Activated CD4-positive, alpha-beta memory T cell treated with anti-CD3 and anti-CD28 coated beads for 36 hours (primary cell): ENCODE measurements at regions of chr3 and their contacts with region 1.

Region 1: GRCh38 chr3:38479431-38480092 is 16.6 kb upstream of the EXOG start:
- DNase-seq: peak; percentile 58
- H3K4me3 Mint-ChIP-seq: no peak overlapping the region
- H3K27ac Mint-ChIP-seq: no peak overlapping the region
- H3K4me1 Mint-ChIP-seq: no peaks in the 10 kb centered on the region
- H3K27me3 Mint-ChIP-seq: no peaks in the 10 kb centered on the region

Region 2: GRCh38 chr3:37924453-37924852 is 555.1 kb before region 1 on chr3:
- CTCF ChIA-PET with region 1: no interaction called
- POLR2A ChIA-PET with region 1: no interaction called
- intact Hi-C with region 1: no loop called
- DNase-seq: no peak
- H3K4me3 Mint-ChIP-seq: no peak overlapping the region
- H3K27ac Mint-ChIP-seq: no peak overlapping the region
- H3K4me1 Mint-ChIP-seq: no peaks in the 10 kb centered on the region
- H3K27me3 Mint-ChIP-seq: no peaks in the 10 kb centered on the region

Region 3: DNA sequence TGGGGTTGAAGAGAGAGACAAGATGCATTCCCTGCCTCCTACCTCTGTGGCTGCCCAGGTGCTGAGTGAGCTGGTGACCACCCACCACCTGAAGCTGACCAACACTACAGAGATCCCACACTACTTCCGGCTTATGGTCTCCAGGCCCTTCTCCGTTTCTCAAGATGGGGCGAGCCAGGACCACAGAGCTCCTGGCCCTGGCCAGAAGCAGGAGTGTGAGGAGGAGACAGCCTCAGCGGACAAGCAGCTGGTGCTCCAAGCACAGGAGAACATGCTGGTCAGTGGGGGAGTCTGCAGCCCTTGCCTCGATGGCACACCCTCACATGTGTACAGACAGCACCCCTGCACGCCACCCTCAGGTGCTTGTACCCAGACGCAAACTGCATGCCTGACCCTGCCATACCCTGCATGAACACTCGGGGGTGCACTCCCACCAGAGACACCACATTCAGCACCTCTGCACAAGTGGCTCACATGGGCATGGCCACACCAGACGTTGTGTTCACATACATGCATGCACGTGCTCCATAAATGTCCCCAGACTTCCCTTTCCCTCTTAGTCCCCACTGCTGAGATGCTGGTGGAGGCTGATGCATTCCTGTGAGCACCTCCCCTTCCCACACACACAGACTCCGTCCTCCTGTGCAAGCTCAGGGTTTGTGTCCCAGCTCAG is 361.7 kb before region 1 on chr3:
- CTCF ChIA-PET with region 1: interaction called, 21 read pairs
- POLR2A ChIA-PET with region 1: no interaction called
- intact Hi-C with region 1: loop called (anchors 5 kb)
- DNase-seq: peak; percentile 85
- H3K4me3 Mint-ChIP-seq: no peak overlapping the region
- H3K27ac Mint-ChIP-seq: no peak overlapping the region
- H3K4me1 Mint-ChIP-seq: no peaks in the 10 kb centered on the region
- H3K27me3 Mint-ChIP-seq: no peaks in the 10 kb centered on the region

Region 4: DNA sequence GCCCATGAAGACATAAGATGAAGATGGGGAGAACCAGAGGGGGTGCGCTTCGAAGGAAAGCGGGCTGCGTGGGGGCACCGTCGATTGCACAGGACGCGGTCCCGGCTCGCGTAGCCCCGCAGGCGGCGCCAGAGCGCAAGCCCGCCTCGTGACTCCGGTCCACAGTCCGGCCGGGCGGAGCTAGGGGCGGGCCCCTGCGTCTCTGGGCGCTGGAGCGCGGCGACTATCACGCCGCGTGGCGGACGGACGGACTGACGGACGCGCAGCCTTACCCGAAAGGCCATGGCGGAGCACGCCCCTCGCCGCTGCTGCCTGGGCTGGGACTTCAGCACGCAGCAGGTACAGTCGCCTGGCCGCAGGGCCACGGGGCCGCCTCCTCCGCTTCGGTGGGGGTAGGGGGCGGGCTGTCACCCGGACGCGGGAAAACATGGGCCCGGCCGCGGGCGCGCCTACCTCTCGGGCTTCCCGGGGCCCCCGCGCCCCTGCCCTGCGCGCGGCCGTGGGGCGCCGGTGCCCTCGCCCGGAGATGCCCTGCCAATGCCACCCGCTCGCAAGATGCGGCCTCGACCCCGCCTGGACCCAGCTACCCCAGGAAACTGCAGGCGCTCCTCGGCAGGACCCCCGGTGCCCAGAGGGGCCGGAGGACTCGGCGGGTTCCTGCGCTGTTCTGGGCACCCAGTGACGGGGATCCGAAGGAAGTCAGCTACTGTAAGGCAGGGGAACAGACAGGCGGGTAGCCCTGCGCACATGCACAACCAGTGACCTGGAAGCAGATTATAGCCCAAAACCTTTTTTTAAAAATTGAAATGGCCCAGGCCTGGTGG is 132.8 kb before region 1 on chr3 and contains the start of gene XYLB:
- CTCF ChIA-PET with region 1: interaction called, 75 read pairs
- POLR2A ChIA-PET with region 1: no interaction called
- intact Hi-C with region 1: loop called (anchors 2 kb)
- DNase-seq: peak; percentile 84
- H3K4me3 Mint-ChIP-seq: peak within 1 kb of the TSS; percentile 71
- H3K27ac Mint-ChIP-seq: no peak within 1 kb of the TSS
- H3K4me1 Mint-ChIP-seq: peaks cover 6% of the 10 kb centered on the region
- H3K27me3 Mint-ChIP-seq: no peaks in the 10 kb centered on the region
- total RNA-seq, gene XYLB: 4.8 to 4.9 TPM

Region 5: DNA sequence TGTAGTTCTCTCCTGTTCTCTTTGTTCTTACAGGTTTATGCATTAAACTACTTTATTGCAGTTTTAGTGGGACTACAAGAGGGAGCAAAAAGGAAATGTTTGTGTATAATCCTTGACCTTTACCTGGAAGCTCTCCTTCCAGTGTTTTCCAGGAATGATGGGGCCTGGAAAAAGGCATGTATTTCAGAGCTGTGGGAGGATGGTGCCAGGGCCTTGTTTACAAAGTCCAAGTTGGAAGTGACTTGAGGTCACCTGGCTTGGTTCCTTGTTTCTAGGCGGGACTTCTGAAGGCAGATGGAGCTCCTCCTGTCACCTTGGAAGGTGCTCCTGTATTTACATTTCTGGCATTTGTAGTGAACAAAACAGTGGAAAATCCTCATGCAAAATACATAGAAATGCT is 10.8 kb before region 1 on chr3:
- CTCF ChIA-PET with region 1: interaction called, 12 read pairs
- POLR2A ChIA-PET with region 1: no interaction called
- intact Hi-C with region 1: no loop called
- DNase-seq: no peak
- H3K4me3 Mint-ChIP-seq: no peak overlapping the region
- H3K27ac Mint-ChIP-seq: no peak overlapping the region
- H3K4me1 Mint-ChIP-seq: peaks cover 5% of the 10 kb centered on the region
- H3K27me3 Mint-ChIP-seq: no peaks in the 10 kb centered on the region

Region 6: DNA sequence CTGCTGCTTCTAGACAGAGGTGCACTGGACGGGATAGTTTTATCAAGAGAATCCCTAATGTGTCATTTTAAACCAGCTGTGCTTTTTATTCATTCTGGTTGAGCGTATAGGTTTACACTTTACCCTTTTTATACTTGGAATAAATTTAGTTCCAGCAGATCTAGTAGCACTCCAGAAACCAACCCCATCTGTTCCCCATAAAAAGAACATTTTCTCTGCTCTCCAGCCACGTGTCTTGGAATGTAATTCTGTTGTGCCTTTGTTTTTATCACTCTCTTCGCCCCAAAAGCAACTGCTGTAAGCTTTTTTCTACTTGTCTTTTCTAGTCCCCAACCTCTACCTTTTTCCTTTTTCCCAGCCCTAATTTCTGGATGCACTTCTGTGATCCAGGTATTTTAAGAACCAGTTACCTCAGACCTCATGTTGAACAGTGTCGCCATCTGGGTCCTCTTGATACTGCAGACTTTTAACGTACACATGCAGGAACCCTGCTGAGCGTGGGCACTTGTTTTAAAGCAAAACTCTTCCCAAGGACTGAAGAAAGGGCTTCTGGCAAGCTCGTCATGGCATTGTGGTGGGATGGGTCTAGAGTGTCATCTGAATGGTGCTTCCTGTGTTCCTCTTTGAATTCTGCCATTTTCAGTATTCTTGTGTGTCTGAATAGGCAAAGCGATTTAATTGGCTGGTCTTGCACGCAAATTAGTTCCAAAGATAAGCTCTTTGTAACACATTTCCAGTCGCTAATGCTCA is 10.9 kb after region 1 on chr3:
- CTCF ChIA-PET with region 1: interaction called, 13 read pairs
- POLR2A ChIA-PET with region 1: no interaction called
- intact Hi-C with region 1: no loop called
- DNase-seq: no peak
- H3K4me3 Mint-ChIP-seq: no peak overlapping the region
- H3K27ac Mint-ChIP-seq: no peak overlapping the region
- H3K4me1 Mint-ChIP-seq: no peaks in the 10 kb centered on the region
- H3K27me3 Mint-ChIP-seq: no peaks in the 10 kb centered on the region